ENCODE measurements at regions of chr19 and their contacts with region 1.

Region 1: DNA sequence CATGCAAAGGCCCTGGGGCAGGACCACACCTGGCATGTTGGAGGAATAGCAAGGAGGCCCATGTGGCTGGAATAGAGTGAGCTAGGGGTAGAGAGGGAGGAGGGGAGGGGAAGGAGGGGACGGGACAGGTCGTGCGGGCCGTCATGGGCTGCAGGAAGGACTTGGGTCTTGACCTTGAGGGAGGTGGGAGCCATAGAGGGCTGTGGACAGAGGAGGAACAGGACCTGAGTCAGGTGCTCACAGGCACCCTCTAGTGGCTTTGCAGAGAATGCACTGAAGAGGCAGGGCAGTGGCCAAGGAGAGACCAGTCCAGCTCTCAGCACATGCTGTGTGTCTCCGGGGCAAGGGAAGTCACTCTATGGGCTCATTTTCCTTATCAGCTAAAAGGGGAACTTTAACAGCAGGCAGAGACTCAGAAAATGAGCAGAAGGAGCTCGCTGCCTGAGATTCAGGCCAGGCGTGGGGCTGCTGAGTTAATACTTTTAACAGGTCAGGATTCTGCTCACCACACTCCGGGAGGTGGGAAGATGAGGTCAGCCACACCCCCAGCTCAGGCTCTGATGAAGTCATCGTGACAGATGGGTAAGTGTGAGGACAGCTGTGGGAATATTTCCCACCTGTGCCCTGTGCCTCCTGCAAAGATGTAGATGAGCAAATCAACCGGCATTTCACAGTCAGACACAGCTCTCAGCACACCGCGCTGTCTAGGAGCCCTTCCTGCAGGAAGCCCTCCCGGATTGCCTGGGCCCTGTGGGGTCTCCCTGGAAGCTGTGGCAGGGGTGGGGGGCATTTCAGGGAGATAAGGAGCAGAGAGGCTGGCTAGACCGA is 6.0 kb upstream of the TNFAIP8L1 start:
- DNase-seq: peak; percentile 67
- H3K4me3 Mint-ChIP-seq: no peak overlapping the region
- H3K27ac Mint-ChIP-seq: peak overlapping the region; percentile 48
- H3K4me1 Mint-ChIP-seq: peaks cover 13% of the 10 kb centered on the region
- H3K27me3 Mint-ChIP-seq: no peaks in the 10 kb centered on the region

Region 2: GRCh38 chr19:4567584-4568071 is 65.7 kb before region 1 on chr19:
- CTCF ChIA-PET with region 1: interaction called, 70 read pairs
- intact Hi-C with region 1: loop called (anchors 1 kb)
- DNase-seq: peak; percentile 83
- H3K4me3 Mint-ChIP-seq: no peak overlapping the region
- H3K27ac Mint-ChIP-seq: no peak overlapping the region
- H3K4me1 Mint-ChIP-seq: no peaks in the 10 kb centered on the region
- H3K27me3 Mint-ChIP-seq: peaks cover 5% of the 10 kb centered on the region

Region 3: GRCh38 chr19:4576016-4576933 is 57.1 kb before region 1 on chr19:
- CTCF ChIA-PET with region 1: interaction called, 70 read pairs
- intact Hi-C with region 1: loop called (anchors 1 kb)
- DNase-seq: peak; percentile 87
- H3K4me3 Mint-ChIP-seq: no peak overlapping the region
- H3K27ac Mint-ChIP-seq: no peak overlapping the region
- H3K4me1 Mint-ChIP-seq: peaks cover 11% of the 10 kb centered on the region
- H3K27me3 Mint-ChIP-seq: peaks cover 40% of the 10 kb centered on the region

Measured in activated naive CD4-positive, alpha-beta T cell treated with anti-CD3 and anti-CD28 coated beads for 36 hours (primary cell).